IMR-90 (cell line): ENCODE measurements at regions of chr6 and their contacts with region 1.

Region 1: DNA sequence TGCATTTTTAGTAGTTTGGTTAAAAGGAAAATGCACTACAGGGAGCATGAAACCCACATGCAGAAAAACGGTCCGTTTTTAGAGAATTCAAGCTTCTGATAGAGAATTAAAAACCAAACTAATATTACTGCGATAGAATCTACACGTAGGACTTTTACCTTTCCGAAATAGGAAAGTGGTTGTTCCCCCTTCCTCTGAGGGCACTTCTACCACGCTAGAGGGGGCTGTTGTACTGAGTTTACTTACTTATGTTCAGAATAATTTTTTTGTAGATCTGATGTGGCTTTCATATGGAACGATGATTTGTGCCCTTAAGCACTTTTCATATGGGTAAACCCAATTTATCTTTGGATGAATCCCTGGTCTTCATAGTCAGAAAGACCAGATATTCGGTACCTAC is 264.3 kb upstream of the PLN start:
- DNase-seq: peak; percentile 68
- ATAC-seq: peak; percentile 55
- H3K4me3 ChIP-seq: no peak overlapping the region
- H3K27ac ChIP-seq: no peak overlapping the region
- H3K4me1 ChIP-seq: no peaks in the 10 kb centered on the region
- H3K27me3 ChIP-seq: no peaks in the 10 kb centered on the region; the same call in 1 of the 2 replicates
- CTCF ChIP-seq: peak; percentile 85
- POLR2A ChIP-seq: no peak
- RAD21 ChIP-seq: peak; percentile 90

Region 2: DNA sequence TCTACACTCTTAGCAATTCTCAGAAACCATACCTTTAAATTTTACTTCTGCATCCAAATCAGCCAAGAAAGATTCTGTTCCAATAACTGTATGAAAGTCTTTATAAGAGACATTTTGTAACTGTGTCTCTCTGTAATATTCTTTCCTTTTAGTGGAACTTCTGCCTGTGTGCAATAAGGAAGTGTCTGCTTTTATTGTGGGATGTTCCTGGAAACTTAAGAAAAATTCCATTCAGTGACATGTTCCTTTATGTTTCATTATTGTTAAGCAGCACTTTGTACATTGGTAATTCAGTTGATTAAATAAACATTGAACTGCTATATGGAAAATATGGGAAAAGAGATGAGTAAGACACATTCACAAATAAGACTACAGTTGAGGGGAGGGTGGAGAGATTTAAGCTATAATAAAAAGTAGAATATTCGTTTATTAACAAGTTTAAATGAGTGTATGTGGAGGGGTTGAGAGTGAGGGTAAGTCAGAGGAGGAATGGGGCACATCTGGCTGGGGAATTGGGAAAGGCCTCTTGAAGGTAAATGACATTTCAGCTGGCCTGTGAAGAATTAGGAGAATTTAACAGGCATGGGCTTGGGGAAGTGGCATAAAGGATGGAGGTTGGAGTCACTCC is 596.6 kb before region 1 on chr6:
- CTCF ChIA-PET with region 1: no interaction called
- POLR2A ChIA-PET with region 1: no interaction called
- dilution Hi-C with region 1: no loop called
- in situ Hi-C with region 1: no loop called
- intact Hi-C with region 1: no loop called
- DNase-seq: no peak
- ATAC-seq: no peak
- H3K4me3 ChIP-seq: no peak overlapping the region
- H3K27ac ChIP-seq: no peak overlapping the region
- H3K4me1 ChIP-seq: peaks cover 6% of the 10 kb centered on the region; the same call in 1 of the 2 replicates
- H3K27me3 ChIP-seq: no peaks in the 10 kb centered on the region
- CTCF ChIP-seq: no peak
- POLR2A ChIP-seq: no peak
- RAD21 ChIP-seq: no peak

Region 3: GRCh38 chr6:118501765-118502164 is 218.0 kb after region 1 on chr6:
- CTCF ChIA-PET with region 1: interaction called, 3 read pairs
- POLR2A ChIA-PET with region 1: no interaction called
- dilution Hi-C with region 1: no loop called
- in situ Hi-C with region 1: loop called (anchors 5 kb)
- intact Hi-C with region 1: no loop called
- DNase-seq: peak; percentile 47
- ATAC-seq: no peak
- H3K4me3 ChIP-seq: no peak overlapping the region
- H3K27ac ChIP-seq: no peak overlapping the region
- H3K4me1 ChIP-seq: peaks cover 3% of the 10 kb centered on the region; the same call in 1 of the 2 replicates
- H3K27me3 ChIP-seq: no peaks in the 10 kb centered on the region
- CTCF ChIP-seq: no peak
- POLR2A ChIP-seq: no peak
- RAD21 ChIP-seq: no peak

Region 4: GRCh38 chr6:118551063-118552053 is 267.6 kb after region 1 on chr6:
- CTCF ChIA-PET with region 1: interaction called, 7 read pairs
- POLR2A ChIA-PET with region 1: no interaction called
- dilution Hi-C with region 1: no loop called
- in situ Hi-C with region 1: no loop called
- intact Hi-C with region 1: loop called (anchors 1 kb)
- DNase-seq: peak; percentile 79
- ATAC-seq: peak; percentile 84
- H3K4me3 ChIP-seq: no peak overlapping the region
- H3K27ac ChIP-seq: no peak overlapping the region
- H3K4me1 ChIP-seq: peaks cover 3% of the 10 kb centered on the region
- H3K27me3 ChIP-seq: no peaks in the 10 kb centered on the region
- CTCF ChIP-seq: peak; percentile 80
- POLR2A ChIP-seq: no peak
- RAD21 ChIP-seq: peak; percentile 81

Region 5: DNA sequence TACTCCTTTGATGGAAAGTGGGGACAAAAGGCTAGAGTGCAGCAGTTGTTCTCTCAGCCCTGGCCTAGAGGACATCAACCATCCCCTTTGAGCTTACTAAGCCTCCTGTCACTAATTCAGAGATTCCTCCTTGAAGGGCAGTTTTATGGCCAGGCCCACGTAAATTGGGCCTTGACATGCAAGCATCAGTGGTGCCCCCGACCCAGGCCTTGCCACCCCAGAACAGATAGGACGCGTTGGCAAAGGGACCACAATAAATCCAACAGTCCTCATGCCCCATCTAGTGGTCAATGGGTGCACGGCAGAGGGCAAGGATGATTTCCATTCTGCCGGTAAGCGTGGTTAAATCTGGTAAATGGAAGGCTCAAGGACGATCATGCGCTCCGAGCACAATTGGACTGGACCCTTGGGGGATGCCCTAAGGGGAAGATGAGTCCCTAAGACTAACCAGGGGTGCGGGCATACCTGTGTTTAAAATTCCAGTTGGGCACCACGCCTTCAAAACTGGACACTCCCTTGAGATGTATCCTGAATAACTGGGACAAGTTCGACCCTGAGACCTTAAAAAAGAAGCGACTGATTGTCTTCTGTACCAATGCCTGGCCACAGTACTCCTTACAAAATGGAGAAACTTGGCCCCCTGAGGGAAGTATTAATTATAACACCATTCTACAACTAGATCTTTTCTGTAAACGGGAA is 335.1 kb after region 1 on chr6:
- CTCF ChIA-PET with region 1: no interaction called
- POLR2A ChIA-PET with region 1: no interaction called
- dilution Hi-C with region 1: no loop called
- in situ Hi-C with region 1: loop called (anchors 10 kb)
- intact Hi-C with region 1: loop called (anchors 1 kb)
- DNase-seq: peak; percentile 26
- ATAC-seq: peak; percentile 94
- H3K4me3 ChIP-seq: no peak overlapping the region
- H3K27ac ChIP-seq: no peak overlapping the region
- H3K4me1 ChIP-seq: no peaks in the 10 kb centered on the region
- H3K27me3 ChIP-seq: no peaks in the 10 kb centered on the region
- CTCF ChIP-seq: peak; percentile 70
- POLR2A ChIP-seq: no peak
- RAD21 ChIP-seq: peak; percentile 76

Region 6: DNA sequence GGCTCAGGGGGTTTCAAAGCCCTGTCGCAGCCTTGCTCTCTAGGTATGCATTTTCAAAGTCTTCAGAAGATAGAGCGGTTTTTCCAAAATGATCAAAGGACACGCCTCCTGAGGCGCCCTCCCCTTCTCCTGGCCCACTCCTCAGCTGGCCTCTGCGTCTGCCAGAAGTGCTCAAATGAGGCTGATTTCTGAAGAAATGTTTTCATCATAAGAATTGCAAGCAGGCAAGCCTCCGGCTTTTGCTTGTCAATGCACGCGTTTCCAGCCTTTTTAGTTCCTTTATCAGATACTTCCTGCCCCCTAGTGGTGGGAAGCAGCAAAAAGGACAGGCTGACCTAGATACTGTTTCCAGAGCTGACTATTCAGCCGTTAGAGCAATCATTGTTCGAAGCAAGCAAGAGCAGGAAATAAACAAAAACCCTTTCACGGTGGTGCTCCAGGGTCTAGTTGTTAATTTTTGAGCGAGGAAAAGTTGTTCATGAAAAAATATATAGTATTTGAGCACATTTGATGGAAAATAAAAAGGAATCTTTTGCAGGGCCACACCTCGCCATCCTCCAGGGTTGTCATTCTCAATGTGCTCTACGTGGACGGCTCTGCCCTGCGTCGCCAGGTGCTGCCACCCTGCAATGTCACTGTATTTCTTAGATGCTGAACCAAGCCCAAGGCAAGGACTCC is 516.8 kb after region 1 on chr6:
- CTCF ChIA-PET with region 1: interaction called, 3 read pairs
- POLR2A ChIA-PET with region 1: no interaction called
- dilution Hi-C with region 1: no loop called
- in situ Hi-C with region 1: loop called (anchors 10 kb)
- intact Hi-C with region 1: loop called (anchors 1 kb)
- DNase-seq: peak; percentile 85
- ATAC-seq: peak; percentile 99
- H3K4me3 ChIP-seq: no peak overlapping the region
- H3K27ac ChIP-seq: no peak overlapping the region
- H3K4me1 ChIP-seq: no peaks in the 10 kb centered on the region
- H3K27me3 ChIP-seq: no peaks in the 10 kb centered on the region
- CTCF ChIP-seq: peak; percentile 85
- POLR2A ChIP-seq: no peak
- RAD21 ChIP-seq: peak; percentile 71

Region 7: DNA sequence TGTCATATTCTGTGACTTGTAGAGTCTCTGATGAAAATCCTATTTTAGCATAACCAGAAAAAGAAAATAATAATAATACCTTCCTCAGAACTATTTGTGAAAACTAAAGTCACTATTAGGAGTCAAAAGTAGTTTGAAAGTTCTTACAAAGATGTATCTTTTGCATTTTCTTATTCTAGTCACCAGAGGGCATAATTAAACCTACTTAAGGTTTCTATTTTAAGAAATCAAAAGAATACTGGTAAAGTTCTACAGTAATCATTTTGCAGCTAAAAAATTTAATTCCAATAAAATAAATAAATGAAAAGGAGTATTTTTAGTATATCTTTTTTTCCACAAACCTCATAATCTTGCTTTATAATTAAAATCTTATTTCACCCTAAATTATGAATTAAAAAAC is 679.2 kb after region 1 on chr6:
- CTCF ChIA-PET with region 1: no interaction called
- POLR2A ChIA-PET with region 1: no interaction called
- dilution Hi-C with region 1: no loop called
- in situ Hi-C with region 1: no loop called
- intact Hi-C with region 1: loop called (anchors 5 kb)
- DNase-seq: peak; percentile 10
- ATAC-seq: no peak
- H3K4me3 ChIP-seq: no peak overlapping the region
- H3K27ac ChIP-seq: no peak overlapping the region
- H3K4me1 ChIP-seq: no peaks in the 10 kb centered on the region
- H3K27me3 ChIP-seq: peaks cover 2% of the 10 kb centered on the region; the same call in 1 of the 2 replicates
- CTCF ChIP-seq: peak; percentile 33
- POLR2A ChIP-seq: no peak
- RAD21 ChIP-seq: no peak; the same call in 1 of the 2 replicates